Head of caudate nucleus (tissue), 42 donors: ENCODE measurements at regions of chr19 and their contacts with region 1.

Region 1: GRCh38 chr19:4877753-4878490 is 10.5 kb upstream of the PLIN3 start:
- DNase-seq: peak; percentile 81 to 97 (median 92)

Region 2: DNA sequence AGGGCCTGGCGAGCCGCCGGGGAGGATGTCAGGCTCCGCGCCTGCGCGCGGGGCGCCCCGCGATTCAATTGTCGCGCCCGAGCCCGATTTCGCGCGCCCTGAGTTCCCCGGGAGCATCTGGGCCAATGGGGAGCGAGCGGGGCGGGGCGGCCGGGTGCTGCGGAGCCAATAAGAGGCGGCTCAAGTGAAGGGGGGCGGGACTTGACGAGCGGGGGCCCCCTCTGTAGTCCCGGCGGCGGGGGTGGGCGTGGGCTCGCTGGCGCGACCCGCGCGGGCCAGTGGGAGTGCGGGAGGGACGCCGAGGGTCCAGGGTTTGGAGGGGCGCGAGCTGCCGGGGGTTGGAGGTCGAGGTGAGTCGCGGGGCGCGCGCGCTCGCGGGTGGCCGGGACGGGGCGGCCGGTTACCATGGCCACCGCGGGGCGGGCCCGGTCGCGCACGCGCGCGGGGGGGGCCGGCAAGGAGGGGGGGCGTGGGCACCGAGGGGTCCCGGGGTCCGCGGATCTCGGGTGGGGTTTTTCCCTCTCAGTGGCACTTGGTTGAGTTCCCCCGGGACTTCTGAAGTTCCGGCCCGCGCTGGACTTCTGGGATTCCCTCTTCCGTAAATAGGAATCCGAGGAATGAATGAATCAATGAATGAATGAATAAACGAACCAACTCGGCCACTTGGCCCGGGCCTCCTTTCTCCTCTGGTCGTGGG is 32.1 kb after region 1 on chr19:
- intact Hi-C with region 1: loop called (anchors 5 kb)
- DNase-seq: peak; percentile 88 to 98 (median 95)